Tibial artery (tissue), 4 donors: ENCODE measurements at regions of chr14 and their contacts with region 1.

Region 1: DNA sequence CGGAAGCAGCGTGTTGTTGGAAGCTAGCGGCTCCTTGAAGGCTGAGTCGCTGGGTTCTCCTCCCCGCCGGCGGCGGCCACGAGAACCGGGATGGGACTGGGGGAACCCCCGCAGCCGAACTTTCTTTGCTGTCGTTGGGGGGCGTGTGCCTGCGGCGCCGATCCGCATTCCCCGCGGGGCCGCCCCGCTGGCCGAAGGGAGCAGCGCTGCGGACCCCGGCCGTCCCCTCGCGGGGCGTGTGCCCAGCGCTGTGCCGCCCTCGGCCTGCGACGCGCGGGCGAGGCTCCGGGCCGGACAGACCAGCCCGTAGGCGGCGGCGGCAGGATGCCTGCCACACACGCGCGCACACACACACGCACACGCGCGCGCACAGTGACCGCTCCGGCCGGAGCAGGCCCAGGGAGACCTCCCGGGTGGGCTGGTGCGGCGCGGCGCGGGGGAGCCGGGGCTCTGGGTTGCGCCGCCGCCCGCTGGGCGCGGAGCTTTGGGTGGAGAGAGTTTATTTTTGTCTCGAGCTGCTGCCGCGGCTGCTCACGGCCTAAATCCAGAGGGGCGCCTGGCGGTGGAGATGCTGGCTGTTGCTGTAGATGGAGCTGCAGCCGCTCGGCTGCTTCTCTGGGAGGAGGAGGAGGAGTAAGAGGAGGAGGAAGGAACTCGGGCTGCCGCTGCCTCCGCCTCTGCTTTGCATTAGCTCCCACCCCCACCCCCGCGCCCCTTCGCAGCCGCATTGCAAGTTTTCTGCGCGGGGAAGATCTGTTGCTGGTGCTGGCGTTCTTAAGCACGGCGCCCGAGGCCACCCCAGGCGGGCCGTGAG is at the start of gene SAMD4A:
- DNase-seq: peak; percentile 85 to 91
- H3K4me3 ChIP-seq: peak within 1 kb of the TSS; percentile 86 to 91
- H3K27ac ChIP-seq: peak within 1 kb of the TSS; percentile 94 to 99
- H3K4me1 ChIP-seq: peaks cover 0 to 37% (median 7%) of the 10 kb centered on the region in 4 donors
- H3K27me3 ChIP-seq: no peaks in the 10 kb centered on the region
- CTCF ChIP-seq: peak; percentile 52 to 55

Region 2: DNA sequence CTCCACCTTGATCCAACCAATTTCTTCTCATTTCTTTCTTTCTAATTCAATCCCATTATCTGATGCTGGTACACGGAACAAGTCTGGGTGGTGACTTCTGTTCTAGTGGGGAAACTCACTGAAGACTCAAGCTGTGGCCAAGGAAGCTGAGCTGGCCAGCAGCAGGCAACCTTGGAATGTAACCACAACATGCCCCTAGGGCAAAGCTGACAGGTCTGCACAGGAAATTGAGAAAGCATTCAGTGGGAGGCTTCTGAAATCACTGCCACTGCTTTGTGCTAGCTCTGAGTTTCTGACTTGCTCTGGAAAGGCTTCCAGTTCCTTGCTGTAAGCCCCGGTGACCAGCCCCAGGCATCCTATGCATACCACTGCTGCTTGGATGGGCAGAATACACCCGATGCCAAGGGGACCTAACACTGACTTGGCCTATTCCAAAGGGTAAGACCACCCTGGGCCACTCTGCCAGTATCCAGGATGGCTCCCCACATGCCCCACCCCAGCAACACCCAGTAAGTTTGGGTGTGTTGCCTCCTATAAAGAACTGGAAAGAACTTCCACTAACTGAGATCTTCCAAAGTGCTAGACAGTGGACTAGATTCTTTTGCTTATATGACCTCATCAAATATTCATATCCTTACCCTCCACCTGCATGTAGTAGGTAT is 254.3 kb before region 1 on chr14:
- intact Hi-C with region 1: no loop called
- DNase-seq: no peak
- H3K4me3 ChIP-seq: no peak overlapping the region
- H3K27ac ChIP-seq: no peak overlapping the region
- H3K4me1 ChIP-seq: no peaks in the 10 kb centered on the region
- H3K27me3 ChIP-seq: no peaks in the 10 kb centered on the region
- CTCF ChIP-seq: no peak

Region 3: DNA sequence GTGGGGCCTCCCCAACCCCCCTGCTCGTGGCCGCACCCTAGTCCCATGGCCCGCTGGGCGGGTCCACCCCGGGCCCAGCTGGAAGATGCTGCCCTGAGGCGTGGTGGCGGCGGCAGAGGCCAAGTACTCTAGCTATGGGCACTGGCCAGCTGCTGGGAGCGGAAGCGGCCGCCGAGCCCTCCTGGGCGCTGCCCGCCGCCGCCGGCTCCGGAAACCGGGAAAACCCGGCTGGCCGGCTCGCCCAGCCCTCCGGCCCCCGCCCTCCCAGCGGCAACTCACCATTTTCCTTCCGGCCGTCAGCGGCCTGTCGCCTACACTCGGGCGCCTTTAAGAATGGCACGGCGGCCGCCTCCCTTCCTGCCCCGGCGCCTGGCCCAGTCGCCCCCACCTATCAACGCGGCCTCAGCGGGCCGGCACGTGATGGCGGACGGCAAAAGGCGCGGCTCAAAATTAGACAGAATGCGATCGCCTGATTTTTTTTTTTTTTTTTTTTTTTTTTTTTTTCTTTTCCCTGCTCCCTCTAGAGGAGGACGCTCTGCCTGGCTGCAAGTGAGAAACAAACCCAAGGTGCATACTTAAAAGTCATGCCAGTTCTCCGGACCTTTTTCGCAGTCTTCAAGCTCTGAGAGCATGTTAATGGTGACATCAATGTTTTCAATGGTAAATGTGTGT is 77.8 kb before region 1 on chr14 and contains the start of gene GMFB:
- intact Hi-C with region 1: no loop called
- DNase-seq: peak; percentile 92 to 96
- H3K4me3 ChIP-seq: peak within 1 kb of the TSS; percentile 70 to 82
- H3K27ac ChIP-seq: peak within 1 kb of the TSS; percentile 91 to 94
- H3K4me1 ChIP-seq: peaks cover 0 to 47% (median 22%) of the 10 kb centered on the region in 4 donors
- H3K27me3 ChIP-seq: no peaks in the 10 kb centered on the region
- CTCF ChIP-seq: peak; percentile 18 to 31

Region 4: GRCh38 chr14:54627540-54628363 is 61.1 kb after region 1 on chr14:
- intact Hi-C with region 1: no loop called
- DNase-seq: peak; percentile 66 to 69
- H3K4me3 ChIP-seq: peak overlapping the region; percentile 5 to 32
- H3K27ac ChIP-seq: peak overlapping the region; percentile 70 to 72
- H3K4me1 ChIP-seq: peaks cover 0 to 90% (median 29%) of the 10 kb centered on the region in 4 donors
- H3K27me3 ChIP-seq: no peaks in the 10 kb centered on the region
- CTCF ChIP-seq: peak in 1 of 2 experiments; percentile 3

Region 5: GRCh38 chr14:54691525-54692283 is 125.1 kb after region 1 on chr14:
- intact Hi-C with region 1: loop called (anchors 5 kb)
- DNase-seq: peak; percentile 82 to 88
- H3K4me3 ChIP-seq: no peak overlapping the region
- H3K27ac ChIP-seq: peak overlapping the region in 1 of 2 donors; percentile 91
- H3K4me1 ChIP-seq: peaks cover 0 to 62% (median 24%) of the 10 kb centered on the region in 4 donors
- H3K27me3 ChIP-seq: no peaks in the 10 kb centered on the region
- CTCF ChIP-seq: peak; percentile 85

Region 6: GRCh38 chr14:54773171-54773975 is 206.8 kb after region 1 on chr14:
- intact Hi-C with region 1: loop called (anchors 1 kb)
- DNase-seq: peak; percentile 85 to 92
- H3K4me3 ChIP-seq: peak overlapping the region in 1 of 2 donors; percentile 8
- H3K27ac ChIP-seq: peak overlapping the region; percentile 84 to 88
- H3K4me1 ChIP-seq: peaks cover 0 to 88% (median 56%) of the 10 kb centered on the region in 4 donors
- H3K27me3 ChIP-seq: no peaks in the 10 kb centered on the region
- CTCF ChIP-seq: peak; percentile 63 to 90

Region 7: DNA sequence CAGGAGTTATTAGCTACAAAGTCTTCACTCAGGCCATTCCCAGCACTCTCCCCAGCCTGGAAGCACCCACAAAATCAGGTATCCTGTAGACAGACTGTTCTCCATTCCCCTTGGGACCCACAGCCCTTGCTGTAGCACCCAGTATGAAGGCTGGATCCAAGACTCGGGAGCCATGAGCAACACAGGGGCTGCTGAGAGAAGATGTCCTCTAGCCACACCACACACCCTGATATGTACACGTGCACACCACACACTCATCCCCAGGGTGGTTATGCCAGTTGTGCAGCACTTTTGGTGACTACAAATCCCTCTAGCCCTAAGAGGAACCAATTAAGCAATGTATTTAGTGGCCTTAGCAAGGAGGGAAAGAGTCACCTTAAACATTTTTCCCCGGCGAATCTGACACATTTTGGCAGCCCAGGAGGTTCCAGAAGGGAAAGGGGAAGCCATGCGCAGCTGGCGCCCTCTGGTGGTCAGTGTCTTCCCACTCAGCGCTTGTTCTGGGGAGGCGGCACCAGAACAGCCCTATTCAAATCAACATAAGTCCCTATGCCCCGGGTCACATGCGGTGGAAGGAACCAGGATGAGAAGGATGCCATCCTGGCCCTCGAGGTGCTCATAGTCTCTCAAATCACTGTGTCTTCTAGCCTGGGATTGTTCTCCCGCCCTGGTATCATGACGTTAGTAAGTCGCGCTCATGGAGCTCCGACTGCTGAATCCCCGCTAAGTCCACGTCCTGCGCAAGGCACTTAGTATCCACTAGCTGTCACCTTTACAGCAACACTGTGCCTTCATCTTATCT is 239.1 kb after region 1 on chr14:
- intact Hi-C with region 1: loop called (anchors 1 kb)
- DNase-seq: peak; percentile 82 to 90
- H3K4me3 ChIP-seq: peak overlapping the region in 1 of 2 donors; percentile 7
- H3K27ac ChIP-seq: no peak overlapping the region
- H3K4me1 ChIP-seq: peaks cover 0 to 8% (median 3%) of the 10 kb centered on the region in 4 donors
- H3K27me3 ChIP-seq: no peaks in the 10 kb centered on the region
- CTCF ChIP-seq: peak; percentile 90 to 92

Region 8: GRCh38 chr14:55000381-55000780 is 433.8 kb after region 1 on chr14:
- intact Hi-C with region 1: no loop called
- DNase-seq: no peak
- H3K4me3 ChIP-seq: no peak overlapping the region
- H3K27ac ChIP-seq: no peak overlapping the region
- H3K4me1 ChIP-seq: no peaks in the 10 kb centered on the region
- H3K27me3 ChIP-seq: no peaks in the 10 kb centered on the region
- CTCF ChIP-seq: no peak